Activated naive CD4-positive, alpha-beta T cell treated with anti-CD3 and anti-CD28 coated beads for 36 hours (primary cell): ENCODE measurements at regions of chr18 and their contacts with region 1.

Region 1: DNA sequence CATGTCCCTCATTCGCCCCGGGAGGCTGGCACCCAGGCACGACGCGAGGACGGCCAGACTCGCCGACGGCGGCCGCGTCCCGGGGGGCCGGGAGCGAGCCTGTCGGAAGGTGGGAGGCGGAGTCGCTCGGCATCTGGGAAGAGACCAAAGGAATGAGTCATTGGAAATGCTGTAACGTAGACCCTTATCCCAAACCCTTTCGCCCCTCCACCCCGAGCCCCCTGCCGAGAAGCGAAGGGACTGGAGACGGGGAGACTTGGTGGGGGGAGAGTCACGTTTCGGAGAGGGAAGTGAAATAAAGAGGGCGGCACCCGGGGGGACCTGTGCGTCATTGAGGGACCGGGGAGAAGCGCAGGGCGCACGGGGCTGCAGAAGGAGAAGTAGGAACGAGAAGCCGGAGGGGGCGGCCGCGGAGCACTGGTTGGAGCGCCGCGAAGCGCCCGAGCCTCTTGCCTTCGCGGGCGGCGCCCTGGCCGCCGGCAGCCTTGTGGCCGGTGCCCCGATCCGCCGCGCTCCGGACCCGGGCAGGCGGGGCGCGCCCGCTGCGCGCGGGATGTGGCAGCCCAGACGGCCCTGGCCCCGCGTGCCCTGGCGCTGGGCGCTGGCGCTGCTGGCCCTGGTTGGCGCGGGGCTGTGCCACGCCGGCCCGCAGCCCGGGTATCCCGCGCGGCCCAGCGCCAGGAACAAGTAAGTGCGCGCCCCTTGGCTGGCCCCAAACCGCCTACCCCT is at the start of gene EMILIN2:
- DNase-seq: peak; percentile 64
- H3K4me3 Mint-ChIP-seq: peak within 1 kb of the TSS; percentile 83
- H3K27ac Mint-ChIP-seq: peak within 1 kb of the TSS; percentile 61
- H3K4me1 Mint-ChIP-seq: peaks cover 18% of the 10 kb centered on the region
- H3K27me3 Mint-ChIP-seq: peaks cover 31% of the 10 kb centered on the region
- total RNA-seq, gene EMILIN2: 12.2 to 13.2 TPM

Region 2: DNA sequence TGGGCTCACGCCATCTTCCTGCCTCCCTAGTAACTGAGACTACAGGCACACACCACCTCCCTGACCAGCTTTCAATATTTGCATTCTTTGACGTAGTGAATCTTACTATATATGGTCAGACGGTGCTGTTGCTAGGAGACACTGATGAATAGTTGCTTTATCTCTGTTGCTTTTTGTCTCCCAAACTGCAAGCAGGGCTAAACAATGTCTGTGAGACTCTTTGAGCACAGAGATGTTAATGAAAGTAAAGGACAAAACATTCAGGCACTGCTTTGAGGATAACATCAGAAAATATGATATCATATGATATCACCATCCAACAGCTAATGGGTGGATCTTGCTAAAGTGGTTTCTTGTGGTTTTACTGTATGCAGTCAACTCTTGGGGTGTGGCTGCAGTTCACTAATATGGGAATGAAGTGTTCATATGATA is 43.0 kb after region 1 on chr18:
- CTCF ChIA-PET with region 1: no interaction called
- intact Hi-C with region 1: loop called (anchors 5 kb)
- DNase-seq: no peak
- H3K4me3 Mint-ChIP-seq: no peak overlapping the region
- H3K27ac Mint-ChIP-seq: no peak overlapping the region
- H3K4me1 Mint-ChIP-seq: peaks cover 31% of the 10 kb centered on the region
- H3K27me3 Mint-ChIP-seq: no peaks in the 10 kb centered on the region